ENCODE measurements at regions of chr19 and their contacts with region 1.

Region 1: DNA sequence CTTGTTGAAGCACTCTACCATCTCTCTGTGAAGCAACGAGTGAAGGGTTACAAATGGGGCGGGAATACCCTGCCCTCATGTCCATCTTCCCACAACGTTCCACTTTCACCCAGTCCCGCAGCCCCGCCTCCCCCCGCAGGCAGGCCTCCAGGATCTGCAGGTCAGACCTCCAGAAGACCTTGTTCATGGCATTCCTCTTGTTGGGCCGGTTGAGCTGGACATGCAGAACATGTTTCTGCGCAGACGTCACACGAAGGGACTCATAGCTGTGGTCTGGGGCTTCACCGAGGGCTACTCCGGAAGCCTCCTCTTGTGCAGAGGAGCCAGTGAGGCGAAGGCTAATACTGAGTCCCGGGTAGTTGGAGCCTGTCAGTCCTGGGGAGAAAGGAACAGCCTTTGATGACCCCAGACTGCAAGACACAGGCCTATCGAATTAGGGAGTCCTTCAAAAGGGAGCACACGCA is 420 bp downstream of the ECH1 start:
- DNase-seq: no peak
- ATAC-seq: peak; percentile 42
- H3K4me3 Mint-ChIP-seq: peak overlapping the region; percentile 94
- H3K27ac Mint-ChIP-seq: peak overlapping the region; percentile 95
- H3K4me1 Mint-ChIP-seq: peaks cover 31% of the 10 kb centered on the region
- H3K27me3 Mint-ChIP-seq: no peaks in the 10 kb centered on the region
- CTCF ChIP-seq: no peak

Region 2: DNA sequence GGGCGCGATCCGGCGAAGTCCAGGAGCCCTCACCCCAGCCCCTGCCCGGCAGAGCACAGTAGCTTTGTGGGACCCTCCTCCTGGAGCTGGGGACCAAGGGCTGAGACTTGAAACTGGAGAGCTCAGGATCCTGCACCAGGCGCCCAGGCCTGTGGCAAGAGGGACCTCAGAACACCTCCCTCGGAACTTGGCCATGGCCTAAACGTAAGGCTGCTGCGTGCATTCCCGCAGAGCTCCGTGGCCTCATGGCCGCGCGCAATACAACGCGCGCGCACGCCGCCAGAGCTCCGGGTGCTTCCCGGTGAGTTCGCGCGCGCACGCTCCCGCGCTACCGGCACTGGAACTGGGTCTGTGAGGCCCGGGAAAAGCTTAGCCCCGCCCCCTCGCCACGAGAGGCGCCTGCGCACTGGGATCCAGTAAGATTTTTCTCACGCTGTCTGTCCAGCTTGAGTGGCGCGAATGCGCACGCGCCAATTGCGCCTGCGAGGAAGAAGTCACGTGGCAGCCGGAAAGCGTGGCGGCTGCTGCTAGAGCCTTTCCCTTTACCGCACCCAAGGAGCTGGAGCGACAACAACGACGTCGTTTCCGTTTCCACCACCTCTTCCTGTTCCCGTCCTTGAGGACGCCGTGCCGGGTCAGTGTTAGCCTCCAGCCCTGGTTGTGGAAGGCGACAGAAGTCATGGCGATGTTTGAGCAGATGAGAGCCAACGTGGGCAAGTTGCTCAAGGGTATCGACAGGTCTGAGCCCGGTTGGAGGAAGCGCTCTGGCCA is 212.4 kb before region 1 on chr19 and contains the start of gene EIF3K:
- CTCF ChIA-PET with region 1: no interaction called
- POLR2A ChIA-PET with region 1: no interaction called
- intact Hi-C with region 1: no loop called
- DNase-seq: peak; percentile 97
- ATAC-seq: peak; percentile 28
- H3K4me3 Mint-ChIP-seq: peak within 1 kb of the TSS; percentile 100
- H3K27ac Mint-ChIP-seq: peak within 1 kb of the TSS; percentile 97
- H3K4me1 Mint-ChIP-seq: peaks cover 53% of the 10 kb centered on the region
- H3K27me3 Mint-ChIP-seq: no peaks in the 10 kb centered on the region
- CTCF ChIP-seq: no peak
- total RNA-seq, gene EIF3K: 344 and 385 TPM in 2 replicates

Region 3: DNA sequence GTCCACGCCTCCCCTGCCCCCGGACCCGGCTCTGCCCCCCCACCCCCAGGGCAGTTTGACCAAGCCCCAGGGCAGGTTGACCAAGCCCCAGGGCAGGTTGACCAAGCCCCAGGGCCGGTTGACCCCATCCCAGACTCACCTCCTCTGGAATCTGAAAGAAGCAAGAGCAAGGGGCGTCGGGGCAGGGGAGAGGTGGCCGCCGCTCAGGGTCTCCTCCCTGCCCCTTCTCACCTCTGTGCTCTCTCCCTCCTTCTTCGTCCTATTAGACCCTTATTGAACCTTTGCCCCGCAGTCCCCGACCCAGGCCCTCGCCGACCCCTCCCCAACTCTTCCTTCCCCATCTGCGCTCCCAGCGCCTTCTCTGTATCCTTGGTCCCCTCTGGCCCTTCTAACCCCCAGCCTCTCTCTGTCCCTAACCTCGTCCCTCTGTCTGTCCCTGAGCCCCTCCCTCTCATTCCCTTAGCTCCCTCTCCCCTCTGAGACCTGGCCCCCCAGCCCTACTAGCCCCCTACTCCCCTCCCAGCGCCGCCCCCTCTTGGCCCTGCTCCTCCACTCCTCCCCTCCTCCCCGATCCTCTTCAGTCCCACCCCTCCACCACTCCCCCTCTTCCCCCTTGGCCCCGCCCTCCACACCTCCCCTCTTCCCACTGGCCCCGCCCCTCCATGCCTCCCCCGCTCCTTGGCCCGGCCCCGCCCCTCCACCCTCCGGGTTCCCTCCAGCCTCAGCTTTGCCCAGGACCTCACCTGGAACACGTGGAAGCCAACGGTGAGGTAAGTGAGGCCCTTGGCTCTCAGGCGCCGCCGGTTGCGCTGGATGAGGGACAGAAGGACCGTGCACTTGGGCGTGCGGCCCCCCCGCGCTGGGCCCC is 94.5 kb before region 1 on chr19:
- CTCF ChIA-PET with region 1: no interaction called
- POLR2A ChIA-PET with region 1: interaction called, 6 read pairs
- intact Hi-C with region 1: loop called (anchors 5 kb)
- DNase-seq: peak; percentile 64
- ATAC-seq: peak; percentile 60
- H3K4me3 Mint-ChIP-seq: peak overlapping the region; percentile 71
- H3K27ac Mint-ChIP-seq: peak overlapping the region; percentile 12
- H3K4me1 Mint-ChIP-seq: peaks cover 38% of the 10 kb centered on the region
- H3K27me3 Mint-ChIP-seq: no peaks in the 10 kb centered on the region
- CTCF ChIP-seq: no peak

Region 4: DNA sequence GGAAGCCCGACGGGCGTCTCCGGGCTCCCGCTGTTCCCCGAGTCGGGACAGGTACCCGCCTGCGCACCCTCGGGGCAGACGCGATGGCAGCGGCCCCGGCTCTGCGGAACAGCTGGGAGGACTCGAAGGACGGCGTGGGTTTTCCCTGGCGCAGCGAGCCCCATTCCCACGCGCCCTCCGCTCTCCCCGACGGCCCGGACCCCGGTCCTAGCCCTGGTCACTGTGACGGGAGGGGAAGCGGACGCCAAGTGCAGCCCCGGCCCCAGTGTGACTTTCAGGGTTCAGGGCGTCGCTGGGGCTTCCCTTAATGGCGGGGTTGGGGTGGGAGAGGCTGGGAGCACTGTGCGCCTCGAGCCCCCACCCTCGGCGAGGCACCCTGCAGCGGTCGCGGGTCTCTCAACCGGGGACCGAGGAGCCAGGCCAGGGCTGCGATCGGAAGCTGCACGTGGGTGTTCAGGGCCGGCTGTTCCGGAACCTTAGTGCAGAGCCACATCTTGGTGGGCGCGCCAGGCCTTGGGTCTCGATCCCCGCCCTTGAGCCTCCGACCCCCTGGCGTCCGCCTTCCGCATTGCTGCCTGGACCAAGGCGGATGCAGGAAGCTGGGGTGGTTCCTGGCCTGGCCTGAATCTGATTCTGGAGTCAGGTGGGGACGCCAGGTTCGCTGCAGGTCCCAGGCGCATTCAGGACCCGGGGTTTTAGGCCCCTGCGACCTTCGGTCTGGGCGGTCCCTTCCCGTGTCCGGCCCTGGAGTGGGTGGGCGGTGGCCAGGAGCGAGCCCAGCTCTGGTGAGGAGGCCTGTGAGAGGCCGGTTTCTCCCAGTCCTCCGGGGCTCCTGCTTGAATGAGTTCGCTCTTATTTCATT is 38.7 kb before region 1 on chr19:
- CTCF ChIA-PET with region 1: no interaction called
- POLR2A ChIA-PET with region 1: interaction called, 16 read pairs
- intact Hi-C with region 1: no loop called
- DNase-seq: peak; percentile 63
- ATAC-seq: peak; percentile 76
- H3K4me3 Mint-ChIP-seq: peak overlapping the region; percentile 71
- H3K27ac Mint-ChIP-seq: no peak overlapping the region
- H3K4me1 Mint-ChIP-seq: peaks cover 6% of the 10 kb centered on the region
- H3K27me3 Mint-ChIP-seq: no peaks in the 10 kb centered on the region
- CTCF ChIP-seq: no peak

Region 5: GRCh38 chr19:38862321-38863059 is 31.3 kb after region 1 on chr19:
- CTCF ChIA-PET with region 1: no interaction called
- POLR2A ChIA-PET with region 1: interaction called, 18 read pairs
- intact Hi-C with region 1: no loop called
- DNase-seq: no peak
- ATAC-seq: no peak
- H3K4me3 Mint-ChIP-seq: peak overlapping the region; percentile 38
- H3K27ac Mint-ChIP-seq: peak overlapping the region; percentile 75
- H3K4me1 Mint-ChIP-seq: peaks cover 79% of the 10 kb centered on the region
- H3K27me3 Mint-ChIP-seq: no peaks in the 10 kb centered on the region
- CTCF ChIP-seq: no peak

Region 6: DNA sequence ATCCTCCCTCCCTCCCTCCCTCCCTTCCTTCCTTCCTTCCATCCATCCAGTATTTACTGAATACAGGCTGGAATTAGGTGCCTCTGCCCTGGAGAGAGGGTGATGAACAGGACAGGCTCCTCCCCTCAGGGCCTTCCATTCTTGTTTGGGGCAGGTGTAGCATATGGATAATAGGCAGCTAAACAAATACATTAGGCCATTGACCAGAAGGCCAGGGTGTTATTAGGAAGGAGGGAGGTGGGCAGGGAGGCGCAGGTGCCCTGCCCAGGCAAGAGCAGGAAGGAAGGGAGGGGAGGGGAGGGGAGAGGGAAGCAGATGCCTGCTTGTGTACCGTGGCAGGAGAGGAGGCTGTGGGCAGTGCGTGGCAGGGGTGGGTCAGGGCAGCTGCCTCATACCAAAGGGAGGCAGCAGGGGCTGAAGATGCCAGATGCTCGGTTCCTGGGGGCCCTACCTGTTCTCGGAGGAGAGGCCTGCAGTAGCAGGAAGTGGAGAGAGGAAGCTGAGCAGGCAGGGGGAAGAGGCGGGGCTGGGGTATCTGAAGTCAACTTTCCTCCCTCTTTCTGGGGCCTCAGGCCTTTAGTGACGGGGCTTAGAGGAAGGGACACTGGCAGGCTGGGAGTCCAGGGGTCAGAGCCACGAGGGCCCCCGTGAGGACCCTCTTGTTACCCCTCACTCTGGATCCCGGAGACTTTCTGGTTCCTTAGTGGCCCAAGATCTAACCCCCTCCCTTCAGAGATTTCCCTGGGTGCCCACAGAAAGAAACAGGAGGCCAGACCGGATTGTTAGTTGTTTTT is 46.8 kb after region 1 on chr19 and contains the start of gene RINL:
- CTCF ChIA-PET with region 1: no interaction called
- POLR2A ChIA-PET with region 1: interaction called, 31 read pairs
- intact Hi-C with region 1: loop called (anchors 2 kb)
- DNase-seq: peak; percentile 57
- ATAC-seq: peak; percentile 94
- H3K4me3 Mint-ChIP-seq: peak within 1 kb of the TSS; percentile 92
- H3K27ac Mint-ChIP-seq: peak within 1 kb of the TSS; percentile 98
- H3K4me1 Mint-ChIP-seq: peaks cover 48% of the 10 kb centered on the region
- H3K27me3 Mint-ChIP-seq: no peaks in the 10 kb centered on the region
- CTCF ChIP-seq: no peak
- total RNA-seq, gene RINL: 53.5 and 65.0 TPM in 2 replicates

Region 7: DNA sequence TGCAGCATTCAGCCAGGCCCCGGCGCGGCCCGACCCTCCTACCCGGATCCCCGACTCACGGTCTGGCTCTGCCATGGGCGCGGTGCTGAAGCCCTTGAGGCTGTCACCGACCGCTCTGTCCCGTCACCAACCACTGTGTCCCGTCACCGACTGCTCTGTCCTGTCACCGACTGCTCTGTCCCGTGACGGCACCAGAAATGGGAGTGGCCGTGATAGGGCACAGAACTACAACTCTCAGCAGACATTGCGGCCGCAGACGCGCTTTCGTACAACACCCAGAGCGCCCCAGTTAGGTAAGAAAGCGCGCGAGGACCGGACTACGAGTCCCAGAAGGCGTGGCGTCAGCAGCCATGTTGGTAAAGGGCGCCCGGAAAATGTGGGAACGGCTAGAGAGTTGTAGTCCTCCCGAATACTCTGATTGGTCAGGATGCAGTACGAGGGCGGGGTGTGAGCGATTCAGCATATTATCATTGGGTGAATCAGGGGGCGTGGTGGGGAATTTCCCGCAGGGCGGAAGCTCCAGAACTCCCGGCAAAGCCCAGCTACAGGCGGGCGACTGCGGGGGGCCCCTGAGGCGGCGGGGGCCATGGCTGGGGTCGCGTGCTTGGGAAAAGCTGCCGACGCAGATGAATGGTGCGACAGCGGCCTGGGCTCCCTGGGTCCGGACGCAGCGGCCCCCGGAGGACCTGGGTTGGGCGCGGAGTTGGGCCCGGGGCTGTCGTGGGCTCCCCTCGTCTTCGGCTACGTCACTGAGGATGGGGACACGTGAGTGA is 68.5 kb after region 1 on chr19 and contains the starts of genes NFKBIB and SIRT2:
- CTCF ChIA-PET with region 1: no interaction called
- POLR2A ChIA-PET with region 1: interaction called, 11 read pairs
- intact Hi-C with region 1: loop called (anchors 1 kb)
- DNase-seq: peak; percentile 91
- ATAC-seq: peak; percentile 91
- H3K4me3 Mint-ChIP-seq: peak within 1 kb of the TSS; percentile 91
- H3K27ac Mint-ChIP-seq: peak within 1 kb of the TSS; percentile 87
- H3K4me1 Mint-ChIP-seq: peaks cover 41% of the 10 kb centered on the region
- H3K27me3 Mint-ChIP-seq: no peaks in the 10 kb centered on the region
- CTCF ChIP-seq: no peak
- total RNA-seq, gene NFKBIB: 45.5 and 49.5 TPM in 2 replicates
- total RNA-seq, gene SIRT2: 28.4 and 32.7 TPM in 2 replicates